Activated T-helper 1 cell treated with anti-CD3 and anti-CD28 coated beads, Interleukin-12 subunit alpha, Interleukin-12 subunit beta, Interleukin-2, Interleukin-4 antibody, amounts not matched to agents 30 ng/mL and 10 ng/mL and 1 ng/mL, durations not matched to agents 14 hours and 24 hours and 36 hours (primary cell): ENCODE measurements at regions of chr13 and their contacts with region 1.

Region 1: DNA sequence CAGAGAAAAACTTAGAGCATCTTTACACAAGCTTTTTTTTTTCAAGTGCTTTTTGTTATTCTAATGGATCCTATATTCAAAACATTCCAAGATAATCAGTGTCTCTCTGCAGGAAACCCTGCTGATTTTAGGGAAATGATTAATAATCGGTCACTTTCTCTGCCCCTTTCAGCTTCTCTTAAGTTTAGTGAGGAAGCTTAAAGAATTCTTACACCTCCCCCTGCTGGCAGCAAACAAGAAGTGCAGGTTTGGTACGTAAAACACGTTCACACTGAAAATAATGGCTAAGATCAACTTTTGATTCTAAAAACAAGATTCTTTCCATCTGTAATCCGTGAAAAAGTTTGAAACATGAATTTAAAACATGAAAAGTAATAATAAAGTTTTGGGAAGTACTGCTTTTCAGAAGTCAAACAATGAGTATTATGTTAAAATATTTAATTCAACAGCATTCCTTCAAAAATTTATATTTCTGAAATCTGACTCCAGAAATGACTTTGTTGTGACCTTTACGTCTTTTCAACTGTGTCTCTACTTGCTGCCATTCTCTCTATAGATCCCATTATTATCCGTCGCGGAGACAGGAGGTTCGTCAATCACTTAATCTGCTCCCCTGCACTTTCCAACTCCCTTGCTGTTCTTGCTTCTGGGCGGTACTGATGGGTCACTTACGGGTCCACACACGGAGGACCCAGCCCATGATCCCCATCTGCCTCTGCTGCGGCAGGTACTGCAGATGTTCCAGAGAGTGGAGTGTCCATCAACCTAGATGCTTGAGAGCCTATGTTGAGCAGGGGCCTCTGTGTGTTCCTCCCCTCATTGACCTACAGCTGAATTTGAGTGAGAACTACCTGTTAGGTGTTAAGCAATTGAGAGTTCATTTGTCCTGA is 203.1 kb upstream of the EDNRB start:
- DNase-seq: peak; percentile 6
- H3K4me3 Mint-ChIP-seq: no peak overlapping the region
- H3K27ac Mint-ChIP-seq: no peak overlapping the region
- H3K4me1 Mint-ChIP-seq: no peaks in the 10 kb centered on the region
- H3K27me3 Mint-ChIP-seq: peaks cover 4% of the 10 kb centered on the region

Region 2: DNA sequence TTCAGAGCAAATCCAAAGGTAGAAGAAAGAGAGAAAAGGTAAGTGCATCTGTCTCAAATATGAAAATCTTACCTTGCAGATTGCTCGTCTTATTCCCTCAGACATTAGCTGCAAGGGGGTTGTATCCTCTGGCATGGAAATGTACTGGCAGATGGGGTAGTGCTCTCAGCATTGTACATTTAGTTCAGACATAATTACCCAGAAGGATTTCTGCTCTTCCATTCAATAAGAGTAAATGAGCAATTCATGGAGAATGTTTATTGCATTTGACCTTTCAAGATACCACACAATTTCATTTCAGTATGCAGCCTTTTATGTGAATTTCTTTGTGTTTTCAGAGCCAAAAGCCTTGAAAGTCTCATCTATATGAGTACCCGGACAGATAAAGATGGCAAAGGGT is 522.4 kb before region 1 on chr13:
- intact Hi-C with region 1: loop called (anchors 5 kb)
- DNase-seq: no peak
- H3K4me3 Mint-ChIP-seq: no peak overlapping the region
- H3K27ac Mint-ChIP-seq: no peak overlapping the region
- H3K4me1 Mint-ChIP-seq: no peaks in the 10 kb centered on the region
- H3K27me3 Mint-ChIP-seq: peaks cover 21% of the 10 kb centered on the region

Region 3: GRCh38 chr13:77779552-77780272 is 342.0 kb before region 1 on chr13:
- intact Hi-C with region 1: loop called (anchors 1 kb)
- DNase-seq: no peak
- H3K4me3 Mint-ChIP-seq: no peak overlapping the region
- H3K27ac Mint-ChIP-seq: no peak overlapping the region
- H3K4me1 Mint-ChIP-seq: peaks cover 8% of the 10 kb centered on the region
- H3K27me3 Mint-ChIP-seq: peaks cover 3% of the 10 kb centered on the region